Activated T-helper 1 cell treated with anti-CD3 and anti-CD28 coated beads, Interleukin-12 subunit alpha, Interleukin-12 subunit beta, Interleukin-2, Interleukin-4 antibody, amounts not matched to agents 30 ng/mL and 10 ng/mL and 1 ng/mL, durations not matched to agents 14 hours and 24 hours and 36 hours (primary cell): ENCODE measurements at regions of chr2 and their contacts with region 1.

Region 1: GRCh38 chr2:43559391-43560230 is 36.2 kb downstream of the THADA start:
- DNase-seq: no peak
- H3K4me3 Mint-ChIP-seq: peak overlapping the region; percentile 41
- H3K27ac Mint-ChIP-seq: peak overlapping the region; percentile 94
- H3K4me1 Mint-ChIP-seq: peaks cover 71% of the 10 kb centered on the region
- H3K27me3 Mint-ChIP-seq: no peaks in the 10 kb centered on the region

Region 2: GRCh38 chr2:43293744-43294695 is 265.6 kb before region 1 on chr2:
- intact Hi-C with region 1: loop called (anchors 2 kb)
- DNase-seq: peak; percentile 66
- H3K4me3 Mint-ChIP-seq: peak overlapping the region; percentile 35
- H3K27ac Mint-ChIP-seq: peak overlapping the region; percentile 77
- H3K4me1 Mint-ChIP-seq: peaks cover 34% of the 10 kb centered on the region
- H3K27me3 Mint-ChIP-seq: no peaks in the 10 kb centered on the region

Region 3: GRCh38 chr2:43387092-43388062 is 172.2 kb before region 1 on chr2:
- intact Hi-C with region 1: loop called (anchors 5 kb)
- DNase-seq: no peak
- H3K4me3 Mint-ChIP-seq: no peak overlapping the region
- H3K27ac Mint-ChIP-seq: peak overlapping the region; percentile 50
- H3K4me1 Mint-ChIP-seq: peaks cover 27% of the 10 kb centered on the region
- H3K27me3 Mint-ChIP-seq: no peaks in the 10 kb centered on the region

Region 4: GRCh38 chr2:43542285-43542937 is 17.2 kb before region 1 on chr2:
- intact Hi-C with region 1: loop called (anchors 1 kb)
- DNase-seq: no peak
- H3K4me3 Mint-ChIP-seq: no peak overlapping the region
- H3K27ac Mint-ChIP-seq: no peak overlapping the region
- H3K4me1 Mint-ChIP-seq: peaks cover 18% of the 10 kb centered on the region
- H3K27me3 Mint-ChIP-seq: no peaks in the 10 kb centered on the region

Region 5: GRCh38 chr2:43569921-43570320 is 10.3 kb after region 1 on chr2:
- intact Hi-C with region 1: loop called (anchors 1 kb)
- DNase-seq: no peak
- H3K4me3 Mint-ChIP-seq: peak overlapping the region; percentile 67
- H3K27ac Mint-ChIP-seq: peak overlapping the region; percentile 79
- H3K4me1 Mint-ChIP-seq: peaks cover 59% of the 10 kb centered on the region
- H3K27me3 Mint-ChIP-seq: no peaks in the 10 kb centered on the region

Region 6: GRCh38 chr2:43576981-43577892 is 17.6 kb after region 1 on chr2:
- intact Hi-C with region 1: loop called (anchors 2 kb)
- DNase-seq: no peak
- H3K4me3 Mint-ChIP-seq: no peak overlapping the region
- H3K27ac Mint-ChIP-seq: no peak overlapping the region
- H3K4me1 Mint-ChIP-seq: peaks cover 27% of the 10 kb centered on the region
- H3K27me3 Mint-ChIP-seq: no peaks in the 10 kb centered on the region

Region 7: GRCh38 chr2:43737097-43737854 is 177.7 kb after region 1 on chr2:
- intact Hi-C with region 1: no loop called
- DNase-seq: no peak
- H3K4me3 Mint-ChIP-seq: no peak overlapping the region
- H3K27ac Mint-ChIP-seq: no peak overlapping the region
- H3K4me1 Mint-ChIP-seq: no peaks in the 10 kb centered on the region
- H3K27me3 Mint-ChIP-seq: peaks cover 21% of the 10 kb centered on the region